ENCODE measurements at regions of chr3 and their contacts with region 1.

Region 1: DNA sequence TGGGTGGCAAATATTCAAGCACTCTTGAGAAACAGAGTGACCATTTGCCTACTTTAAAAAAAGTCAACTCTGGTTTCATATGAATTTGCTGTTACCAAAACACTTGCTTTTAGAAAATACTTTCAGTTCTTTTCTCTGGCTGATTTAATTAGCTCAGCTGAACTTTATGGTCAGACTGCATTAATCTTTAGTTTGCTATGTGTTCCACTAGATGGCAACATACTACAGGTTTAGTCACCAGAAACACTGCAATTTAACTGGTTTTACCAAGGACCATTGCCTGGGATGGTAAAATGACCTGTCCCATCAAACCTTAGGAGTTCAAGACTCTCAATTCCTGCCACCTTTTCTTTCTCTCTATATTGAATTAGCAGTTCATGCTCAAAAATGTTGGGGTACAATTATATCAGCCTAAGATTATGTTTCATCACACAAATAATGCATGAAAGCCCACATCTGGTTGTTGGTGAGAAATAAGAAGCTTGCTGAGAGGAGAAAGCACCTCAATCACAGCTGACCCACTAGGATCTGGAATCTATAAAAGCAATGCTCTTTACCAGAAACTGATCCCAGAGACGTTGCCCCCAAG is 14.2 kb downstream of the EIF4E3 start:
- DNase-seq: peak; percentile 27 to 45 (median 40)
- ATAC-seq: peak; percentile 73
- H3K4me3 ChIP-seq: no peak overlapping the region
- H3K27ac ChIP-seq: no peak overlapping the region
- H3K4me1 ChIP-seq: no peaks in the 10 kb centered on the region
- H3K27me3 ChIP-seq: peaks cover 2 to 8% of the 10 kb centered on the region in 2 experiments; a peak in 3 of 5 replicates
- CTCF ChIP-seq: peak; percentile 40 to 74 (median 60); a peak in 5 of 6 replicates
- EP300 ChIP-seq: no peak
- POLR2A ChIP-seq: no peak
- RAD21 ChIP-seq: peak; percentile 81 to 86

Region 2: DNA sequence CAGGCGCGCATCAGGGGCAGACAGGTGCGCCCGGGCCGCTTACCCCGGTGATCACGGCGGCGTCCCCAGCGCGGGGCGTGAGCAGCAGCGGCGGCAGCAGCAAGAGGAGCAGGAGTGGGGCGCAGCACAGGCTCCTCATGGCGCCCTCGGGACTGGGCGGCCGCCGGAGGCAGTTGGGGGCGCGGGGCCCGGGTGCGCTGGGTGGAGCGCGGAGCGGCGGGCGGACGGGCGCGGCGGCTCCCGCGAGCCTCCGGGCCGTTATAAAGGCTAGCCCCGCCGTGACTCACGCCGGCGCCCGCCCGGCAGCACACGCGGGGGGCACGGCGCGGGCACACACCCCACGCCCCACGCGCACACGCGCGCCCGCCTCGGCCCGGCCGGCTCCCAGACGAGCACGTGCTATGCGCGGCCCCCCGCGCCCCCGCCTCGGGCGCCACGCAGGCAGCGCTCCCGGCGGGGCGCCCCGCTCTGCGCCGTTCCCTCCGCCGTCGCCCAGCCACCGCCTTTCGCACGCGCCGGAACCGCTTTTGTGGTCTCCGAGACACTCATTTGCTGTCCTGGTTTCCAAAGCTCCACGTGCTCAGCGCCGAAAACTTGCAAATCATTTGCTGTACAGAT is 74.0 kb after region 1 on chr3 and contains the start of gene PROK2:
- CTCF ChIA-PET with region 1: no interaction called
- POLR2A ChIA-PET with region 1: no interaction called
- in situ Hi-C with region 1: no loop called
- intact Hi-C with region 1: no loop called
- DNase-seq: no peak
- ATAC-seq: no peak
- H3K4me3 ChIP-seq: no peak within 1 kb of the TSS
- H3K27ac ChIP-seq: no peak within 1 kb of the TSS
- H3K4me1 ChIP-seq: peaks cover 0 to 5% of the 10 kb centered on the region in 2 experiments; a peak in 3 of 5 replicates
- H3K27me3 ChIP-seq: no peaks in the 10 kb centered on the region
- CTCF ChIP-seq: no peak
- EP300 ChIP-seq: no peak
- POLR2A ChIP-seq: no peak
- RAD21 ChIP-seq: no peak
- polyA plus RNA-seq, gene PROK2: 0.07 to 0.13 TPM

Region 3: GRCh38 chr3:71859123-71859519 is 148.1 kb after region 1 on chr3:
- CTCF ChIA-PET with region 1: interaction called, 3 read pairs
- POLR2A ChIA-PET with region 1: no interaction called
- in situ Hi-C with region 1: no loop called
- intact Hi-C with region 1: loop called (anchors 5 kb)
- DNase-seq: peak in 2 of 4 experiments; percentile 10 to 26
- ATAC-seq: peak; percentile 63; the same call in 2 of the 3 replicates
- H3K4me3 ChIP-seq: no peak overlapping the region
- H3K27ac ChIP-seq: no peak overlapping the region
- H3K4me1 ChIP-seq: no peaks in the 10 kb centered on the region
- H3K27me3 ChIP-seq: peaks cover 0 to 13% of the 10 kb centered on the region in 2 experiments; a peak in 3 of 5 replicates
- CTCF ChIP-seq: peak; percentile 16 to 69 (median 41); a peak in 4 of 6 replicates
- EP300 ChIP-seq: no peak
- POLR2A ChIP-seq: no peak
- RAD21 ChIP-seq: peak; percentile 77 to 89

Region 4: DNA sequence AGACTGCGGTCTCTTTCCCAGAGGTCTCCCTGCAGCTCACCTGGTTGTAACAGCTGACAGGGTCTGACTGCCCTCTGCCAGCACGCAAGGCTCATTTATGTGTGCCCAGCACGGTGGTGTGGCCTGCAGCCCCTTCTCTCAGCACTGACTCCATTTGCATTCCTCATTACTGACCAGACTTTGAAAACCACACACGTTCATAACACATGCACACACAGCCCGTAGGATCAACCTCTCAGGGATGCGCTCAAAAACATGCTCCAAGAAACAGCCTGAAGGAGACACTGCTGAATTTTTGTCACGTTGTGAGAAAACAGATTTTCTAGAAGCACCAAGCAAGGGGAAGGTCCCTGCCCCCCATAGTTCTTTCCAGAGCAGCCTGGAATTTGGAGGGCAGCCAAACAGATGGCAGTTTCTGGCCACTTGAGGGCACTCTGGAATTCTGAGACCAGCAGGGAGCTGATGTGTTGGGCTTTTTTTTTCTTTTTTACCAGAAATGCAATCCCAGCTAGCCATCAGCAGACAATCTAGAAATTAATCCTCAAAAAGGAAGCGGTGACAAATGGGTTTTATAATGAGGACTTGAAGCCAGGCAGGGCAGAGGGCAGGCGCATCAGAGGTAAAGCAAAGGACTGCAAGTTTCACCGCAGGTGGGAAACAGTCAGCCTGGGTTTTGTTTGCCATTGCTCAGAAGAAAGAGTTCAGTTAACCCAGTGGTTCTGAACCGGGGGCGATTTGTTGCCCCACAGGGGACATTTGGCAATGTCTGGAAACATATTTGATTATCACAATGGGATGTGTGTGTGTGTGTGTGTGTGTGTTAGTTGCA is 244.5 kb after region 1 on chr3:
- CTCF ChIA-PET with region 1: no interaction called
- POLR2A ChIA-PET with region 1: no interaction called
- in situ Hi-C with region 1: no loop called
- intact Hi-C with region 1: loop called (anchors 5 kb)
- DNase-seq: peak; percentile 21 to 66 (median 35)
- ATAC-seq: peak; percentile 64
- H3K4me3 ChIP-seq: no peak overlapping the region
- H3K27ac ChIP-seq: no peak overlapping the region
- H3K4me1 ChIP-seq: peaks cover 0 to 5% of the 10 kb centered on the region in 2 experiments; a peak in 2 of 5 replicates
- H3K27me3 ChIP-seq: peaks cover 0 to 6% of the 10 kb centered on the region in 2 experiments; a peak in 2 of 5 replicates
- CTCF ChIP-seq: peak; percentile 60 to 71 (median 63)
- EP300 ChIP-seq: peak; percentile 46
- POLR2A ChIP-seq: no peak
- RAD21 ChIP-seq: peak; percentile 68 to 80

Region 5: GRCh38 chr3:72818092-72818773 is 1107.2 kb after region 1 on chr3:
- CTCF ChIA-PET with region 1: interaction called, 3 read pairs
- POLR2A ChIA-PET with region 1: no interaction called
- in situ Hi-C with region 1: loop called (anchors 10 kb)
- intact Hi-C with region 1: loop called (anchors 5 kb)
- DNase-seq: peak in 1 of 4 experiments; percentile 12
- ATAC-seq: peak; percentile 50; the same call in 1 of the 3 replicates
- H3K4me3 ChIP-seq: no peak overlapping the region
- H3K27ac ChIP-seq: no peak overlapping the region
- H3K4me1 ChIP-seq: peaks cover 0 to 7% of the 10 kb centered on the region in 2 experiments; a peak in 2 of 5 replicates
- H3K27me3 ChIP-seq: no peaks in the 10 kb centered on the region
- CTCF ChIP-seq: peak in 2 of 3 experiments; percentile 60 to 71; a peak in 4 of 6 replicates
- EP300 ChIP-seq: no peak
- POLR2A ChIP-seq: no peak
- RAD21 ChIP-seq: peak; percentile 76 to 84

Region 6: DNA sequence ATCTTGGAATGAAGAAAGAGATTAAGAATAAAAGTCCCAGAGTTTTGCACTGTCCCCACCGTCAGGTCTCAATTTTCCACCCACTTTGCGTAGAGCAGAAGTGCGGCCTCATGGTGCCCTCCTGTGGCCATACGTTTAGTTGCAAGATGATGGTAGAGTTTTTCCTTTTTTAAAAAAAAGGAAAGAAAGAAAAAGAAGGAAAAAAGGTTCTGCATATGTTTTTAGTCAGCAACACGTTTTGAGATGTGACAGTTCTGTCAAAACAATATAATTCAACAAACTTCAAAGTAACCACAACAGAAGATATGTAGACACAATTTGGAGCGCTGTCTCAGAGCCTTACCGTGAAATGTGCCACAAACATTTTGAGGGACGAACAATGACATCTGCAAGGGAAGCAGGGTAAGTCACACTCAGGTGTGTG is 1375.1 kb after region 1 on chr3:
- CTCF ChIA-PET with region 1: no interaction called
- POLR2A ChIA-PET with region 1: no interaction called
- in situ Hi-C with region 1: loop called (anchors 25 kb)
- intact Hi-C with region 1: loop called (anchors 10 kb)
- DNase-seq: peak; percentile 42 to 62 (median 46)
- ATAC-seq: peak; percentile 84
- H3K4me3 ChIP-seq: no peak overlapping the region
- H3K27ac ChIP-seq: no peak overlapping the region
- H3K4me1 ChIP-seq: no peaks in the 10 kb centered on the region; a peak in 1 of 5 replicates
- H3K27me3 ChIP-seq: no peaks in the 10 kb centered on the region; a peak in 1 of 5 replicates
- CTCF ChIP-seq: peak; percentile 68 to 79 (median 71)
- EP300 ChIP-seq: no peak
- POLR2A ChIP-seq: no peak
- RAD21 ChIP-seq: peak; percentile 80 to 81